ENCODE measurements at regions of chr6 and their contacts with region 1.

Region 1: DNA sequence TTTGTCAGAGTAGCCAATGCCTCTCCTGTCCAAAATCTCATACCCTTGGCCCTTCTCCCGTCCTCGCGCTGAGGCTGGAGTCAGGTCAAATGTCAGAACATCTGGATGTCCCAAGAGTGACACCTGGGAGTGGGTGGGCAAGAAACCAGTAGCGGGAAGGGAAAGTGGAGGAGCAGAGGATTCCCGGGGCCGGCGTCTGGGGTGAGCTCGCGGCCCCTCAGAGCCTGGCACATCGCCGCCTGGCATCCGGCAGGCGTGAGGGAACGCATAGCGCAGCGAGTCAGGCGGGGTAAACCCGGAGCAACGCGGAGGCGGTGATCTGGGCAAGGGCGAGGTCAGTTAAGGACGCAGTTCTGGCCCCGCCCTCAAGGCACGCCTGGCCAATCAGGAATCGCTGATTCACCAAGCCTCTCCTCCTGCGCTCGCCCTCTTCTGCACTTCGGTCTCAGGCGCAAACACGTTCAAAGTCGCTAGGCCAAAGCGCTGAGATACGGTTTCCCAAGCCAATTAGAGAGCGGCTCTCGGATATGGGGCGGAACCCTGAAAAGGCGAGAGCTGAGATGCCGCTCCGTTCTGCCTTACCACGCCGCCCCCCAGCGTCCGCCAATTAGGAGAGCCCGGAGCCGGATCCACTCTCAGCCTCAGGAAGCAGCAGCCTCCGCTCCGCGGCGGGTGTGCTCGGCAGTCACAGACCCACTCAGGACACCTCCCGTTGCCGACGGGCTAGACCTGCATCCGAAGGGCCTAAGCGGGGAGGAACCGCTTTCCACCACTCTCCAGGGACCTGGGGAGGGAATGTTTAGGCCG is 22.5 kb downstream of the VPS52 start:
- DNase-seq: peak; percentile 97
- H3K4me3 Mint-ChIP-seq: peak overlapping the region; percentile 66
- H3K27ac Mint-ChIP-seq: peak overlapping the region; percentile 51
- H3K4me1 Mint-ChIP-seq: peaks cover 26% of the 10 kb centered on the region
- H3K27me3 Mint-ChIP-seq: peaks cover 11% of the 10 kb centered on the region
- CTCF ChIP-seq: no peak

Region 2: DNA sequence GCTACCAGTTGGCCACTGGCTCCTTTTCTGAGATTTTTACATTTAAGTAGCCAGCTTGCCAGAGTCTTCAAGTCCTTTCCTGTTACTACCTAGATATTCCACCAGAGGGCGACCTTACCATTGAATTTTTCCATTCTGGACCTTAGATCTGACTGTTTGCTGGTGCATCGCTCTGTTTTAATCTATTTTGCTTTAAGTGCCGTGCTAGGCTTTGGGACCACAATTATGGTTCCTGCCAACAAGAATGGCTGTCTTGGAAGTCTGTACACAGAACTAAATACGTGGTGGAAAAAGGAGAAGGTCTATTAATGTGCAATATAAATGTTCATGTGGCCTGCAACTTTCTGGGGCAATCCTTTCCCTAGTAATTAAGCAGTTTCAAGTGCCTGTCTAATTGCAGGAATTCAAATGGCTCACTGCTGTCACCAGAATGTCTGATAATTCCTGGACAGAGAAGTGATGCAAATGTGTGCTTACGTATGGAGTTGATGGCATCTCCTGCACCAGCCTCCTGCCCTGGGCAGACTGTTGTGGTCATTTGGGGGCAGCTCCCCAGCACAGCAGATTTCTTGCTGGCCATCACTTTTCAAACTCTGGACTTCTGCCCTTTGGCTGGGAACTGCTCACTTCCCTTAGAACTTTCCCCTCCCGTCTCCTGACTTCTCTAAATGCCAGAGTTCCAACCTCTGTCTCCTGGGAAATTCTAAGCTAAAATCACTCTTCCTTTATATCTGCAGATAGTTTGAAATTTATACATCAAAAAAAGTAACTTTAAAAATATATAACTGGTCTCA is 234.1 kb before region 1 on chr6:
- CTCF ChIA-PET with region 1: interaction called, 4 read pairs
- intact Hi-C with region 1: loop called (anchors 5 kb)
- DNase-seq: peak; percentile 78
- H3K4me3 Mint-ChIP-seq: no peak overlapping the region
- H3K27ac Mint-ChIP-seq: no peak overlapping the region
- H3K4me1 Mint-ChIP-seq: peaks cover 37% of the 10 kb centered on the region
- H3K27me3 Mint-ChIP-seq: peaks cover 46% of the 10 kb centered on the region
- CTCF ChIP-seq: peak; percentile 85

Region 3: GRCh38 chr6:33126101-33126714 is 122.9 kb before region 1 on chr6:
- CTCF ChIA-PET with region 1: interaction called, 12 read pairs
- intact Hi-C with region 1: no loop called
- DNase-seq: peak; percentile 85
- H3K4me3 Mint-ChIP-seq: no peak overlapping the region
- H3K27ac Mint-ChIP-seq: no peak overlapping the region
- H3K4me1 Mint-ChIP-seq: no peaks in the 10 kb centered on the region
- H3K27me3 Mint-ChIP-seq: peaks cover 98% of the 10 kb centered on the region
- CTCF ChIP-seq: peak; percentile 69

Region 4: GRCh38 chr6:33172688-33173534 is 76.2 kb before region 1 on chr6:
- CTCF ChIA-PET with region 1: interaction called, 13 read pairs
- intact Hi-C with region 1: no loop called
- DNase-seq: peak; percentile 69
- H3K4me3 Mint-ChIP-seq: no peak overlapping the region
- H3K27ac Mint-ChIP-seq: peak overlapping the region; percentile 25
- H3K4me1 Mint-ChIP-seq: peaks cover 9% of the 10 kb centered on the region
- H3K27me3 Mint-ChIP-seq: peaks cover 89% of the 10 kb centered on the region
- CTCF ChIP-seq: peak; percentile 80

Region 5: GRCh38 chr6:33204378-33205190 is 44.5 kb before region 1 on chr6 and contains the start of gene HSD17B8:
- CTCF ChIA-PET with region 1: interaction called, 13 read pairs
- intact Hi-C with region 1: loop called (anchors 5 kb)
- DNase-seq: peak; percentile 99
- H3K4me3 Mint-ChIP-seq: peak within 1 kb of the TSS; percentile 97
- H3K27ac Mint-ChIP-seq: peak within 1 kb of the TSS; percentile 81
- H3K4me1 Mint-ChIP-seq: peaks cover 61% of the 10 kb centered on the region
- H3K27me3 Mint-ChIP-seq: no peaks in the 10 kb centered on the region
- CTCF ChIP-seq: no peak
- total RNA-seq, gene HSD17B8: 40.4 and 41.7 TPM in 2 replicates